ENCODE measurements at regions of chr21 and their contacts with region 1.

Region 1: GRCh38 chr21:42156690-42157577 is 62.0 kb upstream of the ABCG1 start:
- DNase-seq: no peak
- H3K4me3 ChIP-seq: no peak overlapping the region
- H3K27ac ChIP-seq: no peak overlapping the region
- H3K4me1 ChIP-seq: peaks cover 0 to 40% (median 22%) of the 10 kb centered on the region in 4 experiments
- H3K27me3 ChIP-seq: no peaks in the 10 kb centered on the region

Region 2: DNA sequence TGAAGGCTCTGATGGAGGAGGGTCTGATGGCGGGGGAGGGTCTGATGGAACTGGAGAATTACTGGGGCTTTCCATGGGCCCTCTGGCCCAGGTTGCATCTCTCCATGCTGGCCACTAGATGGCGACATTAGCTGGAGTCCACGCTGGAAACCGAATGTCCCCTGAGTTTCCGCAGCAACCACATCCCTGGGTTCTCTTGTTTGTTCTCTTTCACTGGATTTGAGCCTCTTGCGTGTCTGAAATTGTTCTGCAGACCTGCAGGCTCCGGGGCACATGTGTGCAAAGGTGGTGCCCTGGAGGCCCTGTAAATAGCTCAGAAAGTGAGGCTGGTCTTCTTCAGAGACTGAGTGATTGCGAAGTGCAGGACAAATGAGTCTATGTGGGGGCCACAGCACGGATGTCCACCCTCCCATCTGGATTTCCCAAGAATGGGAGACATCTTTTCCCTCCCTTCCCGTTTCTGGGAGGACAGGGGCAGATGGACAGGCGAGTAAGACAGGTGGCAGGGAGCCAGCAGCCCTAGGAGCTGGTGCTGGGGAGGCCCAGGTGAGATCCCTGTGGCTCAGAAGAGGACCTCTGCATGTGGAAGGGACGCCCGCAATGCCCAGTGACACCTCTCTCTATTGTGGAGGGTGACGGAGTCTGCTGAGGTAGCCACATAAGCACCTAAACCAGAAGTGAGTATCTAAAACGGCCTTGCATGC is 11.2 kb before region 1 on chr21:
- CTCF ChIA-PET with region 1: interaction called, 23 read pairs
- POLR2A ChIA-PET with region 1: interaction called, 3 read pairs
- DNase-seq: peak; percentile 68 to 86 (median 82)
- H3K4me3 ChIP-seq: no peak overlapping the region
- H3K27ac ChIP-seq: no peak overlapping the region
- H3K4me1 ChIP-seq: peaks cover 0 to 15% (median 9%) of the 10 kb centered on the region in 4 experiments
- H3K27me3 ChIP-seq: no peaks in the 10 kb centered on the region

Measured in common myeloid progenitor, CD34-positive (primary cell).